ENCODE measurements at regions of chr3 and their contacts with region 1.

Region 1: GRCh38 chr3:136366289-136366688 is 116.1 kb downstream of the PCCB start:
- DNase-seq: peak; percentile 52
- H3K4me3 Mint-ChIP-seq: no peak overlapping the region
- H3K27ac Mint-ChIP-seq: no peak overlapping the region
- H3K4me1 Mint-ChIP-seq: peaks cover 6% of the 10 kb centered on the region
- H3K27me3 Mint-ChIP-seq: no peaks in the 10 kb centered on the region
- CTCF ChIP-seq: no peak

Region 2: GRCh38 chr3:136351905-136352304 is 14.4 kb before region 1 on chr3:
- CTCF ChIA-PET with region 1: interaction called, 11 read pairs
- POLR2A ChIA-PET with region 1: interaction called, 7 read pairs
- intact Hi-C with region 1: no loop called
- DNase-seq: no peak
- H3K4me3 Mint-ChIP-seq: no peak overlapping the region
- H3K27ac Mint-ChIP-seq: no peak overlapping the region
- H3K4me1 Mint-ChIP-seq: peaks cover 15% of the 10 kb centered on the region
- H3K27me3 Mint-ChIP-seq: no peaks in the 10 kb centered on the region
- CTCF ChIP-seq: peak; percentile 29

Region 3: DNA sequence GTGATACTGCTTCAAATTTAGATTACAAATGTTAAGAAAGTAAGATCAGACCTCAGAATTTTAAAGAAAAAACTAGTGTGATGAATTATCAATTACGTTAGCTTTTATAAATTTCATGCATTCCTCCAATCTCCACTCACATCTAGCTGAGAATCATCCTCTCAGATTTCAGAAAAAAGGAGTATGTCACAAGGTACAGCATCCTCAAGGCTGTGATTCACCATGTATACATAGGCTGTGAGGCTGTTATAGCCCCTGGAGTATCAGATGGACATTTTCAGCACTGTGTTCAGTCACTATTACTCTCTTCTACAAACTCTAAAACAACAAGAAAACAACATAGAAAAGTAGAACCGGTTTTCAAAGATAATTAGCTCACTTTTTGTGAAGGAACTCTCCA is 98.2 kb after region 1 on chr3:
- CTCF ChIA-PET with region 1: no interaction called
- POLR2A ChIA-PET with region 1: no interaction called
- intact Hi-C with region 1: no loop called
- DNase-seq: peak; percentile 3
- H3K4me3 Mint-ChIP-seq: no peak overlapping the region
- H3K27ac Mint-ChIP-seq: no peak overlapping the region
- H3K4me1 Mint-ChIP-seq: peaks cover 6% of the 10 kb centered on the region
- H3K27me3 Mint-ChIP-seq: no peaks in the 10 kb centered on the region
- CTCF ChIP-seq: no peak

Region 4: DNA sequence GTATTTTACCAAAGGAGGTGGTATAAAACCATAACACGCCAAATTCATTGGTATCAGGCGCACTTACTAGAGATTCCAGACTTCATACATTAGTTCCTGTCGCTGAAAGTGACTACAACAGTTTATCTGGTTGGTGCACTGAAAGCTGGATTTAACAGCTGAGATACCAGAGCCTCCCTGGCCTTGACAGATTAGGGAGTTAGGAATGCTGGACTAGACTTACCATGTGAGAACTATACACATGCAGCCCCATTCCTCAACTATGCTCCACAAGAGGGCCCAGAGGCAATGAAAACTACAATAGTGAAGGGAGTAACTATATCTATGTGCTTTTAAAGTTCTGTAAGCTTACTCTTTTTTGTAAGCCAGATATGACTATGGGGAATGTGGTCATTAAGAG is 211.5 kb after region 1 on chr3:
- CTCF ChIA-PET with region 1: no interaction called
- POLR2A ChIA-PET with region 1: no interaction called
- intact Hi-C with region 1: no loop called
- DNase-seq: no peak
- H3K4me3 Mint-ChIP-seq: no peak overlapping the region
- H3K27ac Mint-ChIP-seq: no peak overlapping the region
- H3K4me1 Mint-ChIP-seq: no peaks in the 10 kb centered on the region
- H3K27me3 Mint-ChIP-seq: no peaks in the 10 kb centered on the region
- CTCF ChIP-seq: no peak

Region 5: GRCh38 chr3:137180220-137180619 is 813.9 kb after region 1 on chr3:
- CTCF ChIA-PET with region 1: no interaction called
- POLR2A ChIA-PET with region 1: no interaction called
- intact Hi-C with region 1: no loop called
- DNase-seq: no peak
- H3K4me3 Mint-ChIP-seq: no peak overlapping the region
- H3K27ac Mint-ChIP-seq: no peak overlapping the region
- H3K4me1 Mint-ChIP-seq: no peaks in the 10 kb centered on the region
- H3K27me3 Mint-ChIP-seq: no peaks in the 10 kb centered on the region
- CTCF ChIP-seq: no peak

Measured in MCF 10A (cell line).